AG04450 (cell line): ENCODE measurements at regions of chr17 and their contacts with region 1.

Region 1: GRCh38 chr17:10127819-10128425 is 70.5 kb downstream of the GAS7 start:
- DNase-seq: peak; percentile 93
- H3K4me3 ChIP-seq: 0 out of 2 replicates have a peak overlapping the region, but pooled peaks have one; percentile 12
- H3K27ac ChIP-seq: peak overlapping the region; percentile 98
- H3K27me3 ChIP-seq: no peaks in the 10 kb centered on the region
- CTCF ChIP-seq: no peak

Region 2: DNA sequence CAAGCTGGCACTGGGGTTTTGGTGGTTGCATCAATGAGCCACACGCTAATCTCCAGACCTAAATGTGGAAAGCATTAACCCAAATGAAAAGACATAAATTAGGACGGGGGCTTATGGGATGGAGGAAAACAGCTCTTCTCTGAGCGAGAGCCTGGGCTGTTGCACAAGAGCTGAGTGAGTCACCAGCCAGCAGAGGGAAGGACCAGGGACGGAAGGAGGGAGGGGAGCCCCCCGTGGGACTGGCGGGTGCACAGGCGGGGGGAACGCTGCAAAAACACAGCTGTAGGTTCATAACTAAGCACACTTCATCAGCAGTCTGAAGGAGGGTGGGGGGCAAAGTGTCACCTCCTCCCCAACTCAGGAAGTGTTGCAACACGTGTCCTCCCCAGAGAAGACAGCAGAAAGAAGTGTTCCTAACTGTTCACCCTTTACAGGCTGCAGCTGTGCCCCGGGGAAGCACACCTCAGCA is 12.8 kb before region 1 on chr17:
- CTCF ChIA-PET with region 1: no interaction called
- POLR2A ChIA-PET with region 1: interaction called, 19 read pairs
- DNase-seq: peak; percentile 85
- H3K4me3 ChIP-seq: peak overlapping the region; percentile 33
- H3K27ac ChIP-seq: peak overlapping the region; percentile 95
- H3K27me3 ChIP-seq: no peaks in the 10 kb centered on the region
- CTCF ChIP-seq: no peak

Region 3: DNA sequence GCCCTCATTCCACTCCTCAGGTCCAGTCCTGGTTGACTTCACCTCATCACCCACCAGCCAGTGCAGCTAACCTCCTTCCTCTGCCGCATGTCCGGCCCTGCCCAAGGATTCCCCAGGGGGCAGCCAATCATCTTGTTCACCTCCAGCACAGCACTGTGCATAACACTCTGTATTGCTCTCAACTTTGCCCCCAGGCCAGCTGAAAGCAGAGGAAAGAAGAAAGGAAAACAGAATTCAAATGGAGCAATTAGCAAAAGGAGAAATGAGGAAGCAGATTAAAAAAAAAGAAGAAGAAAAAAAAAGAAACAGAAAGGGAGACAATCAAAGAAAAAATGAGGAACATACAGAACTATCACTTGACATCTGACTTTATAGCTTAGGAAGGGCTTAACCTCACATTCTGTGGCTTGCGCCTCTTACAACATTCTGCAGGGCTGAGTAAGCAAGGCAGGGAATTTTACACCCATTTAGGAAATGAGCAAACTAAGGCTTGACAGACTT is 44.4 kb after region 1 on chr17:
- CTCF ChIA-PET with region 1: no interaction called
- POLR2A ChIA-PET with region 1: no interaction called
- DNase-seq: no peak
- H3K4me3 ChIP-seq: no peak overlapping the region
- H3K27ac ChIP-seq: no peak overlapping the region
- H3K27me3 ChIP-seq: peaks cover 2% of the 10 kb centered on the region
- CTCF ChIP-seq: no peak

Region 4: DNA sequence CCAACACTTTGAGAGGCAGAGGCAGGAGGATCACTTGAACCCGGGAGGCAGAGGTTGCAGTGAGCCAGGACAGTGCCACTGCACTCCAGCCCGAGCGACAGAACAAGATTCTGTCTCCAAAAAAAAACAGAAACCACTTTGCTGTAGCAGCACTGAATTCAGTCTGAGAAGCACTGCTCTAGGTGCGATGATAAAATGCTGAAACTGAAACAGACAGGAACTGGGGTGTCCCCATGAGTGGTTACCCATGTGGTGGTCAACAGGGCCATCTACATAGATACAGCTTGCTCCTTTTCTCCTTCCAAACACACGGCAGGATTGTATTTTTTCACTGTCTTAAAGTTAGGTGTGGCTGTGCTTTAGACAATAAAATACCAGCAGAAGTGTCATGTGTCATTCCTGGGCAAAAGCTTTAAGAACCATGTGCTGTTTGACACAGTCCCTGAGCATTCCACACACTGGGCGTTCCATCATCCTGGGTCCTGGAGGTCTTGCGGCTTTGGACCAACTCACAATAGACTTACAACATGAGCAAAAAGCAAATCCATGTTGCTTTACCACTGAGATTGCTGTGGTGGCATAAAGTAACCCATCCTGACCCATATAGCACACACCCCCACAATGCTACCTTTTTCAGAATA is 59.0 kb after region 1 on chr17:
- CTCF ChIA-PET with region 1: no interaction called
- POLR2A ChIA-PET with region 1: no interaction called
- DNase-seq: no peak
- H3K4me3 ChIP-seq: no peak overlapping the region
- H3K27ac ChIP-seq: no peak overlapping the region
- H3K27me3 ChIP-seq: no peaks in the 10 kb centered on the region
- CTCF ChIP-seq: no peak